Sciatic nerve (tissue), 2 donors: ENCODE measurements at regions of chr17 and their contacts with region 1.

Region 1: DNA sequence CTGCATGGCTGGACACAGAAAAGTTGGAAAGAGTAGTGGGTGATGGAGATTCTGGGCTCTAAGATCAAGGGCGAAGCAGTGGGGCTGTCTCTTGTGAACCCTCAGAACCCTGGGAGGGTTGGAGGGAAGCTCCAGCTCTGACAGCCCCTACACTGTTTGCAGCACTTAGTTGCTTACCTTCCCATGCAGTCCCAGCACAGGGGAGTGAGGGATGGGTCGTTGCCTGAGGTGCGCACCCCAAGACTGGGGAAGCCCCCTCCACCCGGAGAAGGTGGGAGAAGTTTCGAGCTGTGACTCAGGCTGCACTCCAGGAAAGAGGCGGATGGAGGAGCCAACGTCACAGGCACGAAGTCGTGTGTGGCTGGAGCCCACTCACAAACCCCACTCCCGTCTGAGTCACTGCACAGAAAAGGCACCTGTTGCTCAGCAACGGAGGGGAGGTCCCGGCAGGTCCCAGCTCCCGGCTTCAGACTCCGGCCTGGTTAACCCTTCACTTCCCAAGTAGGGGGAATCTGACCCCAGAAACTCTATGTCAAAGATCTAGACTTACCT is 60.1 kb downstream of the AIPL1 start:
- DNase-seq: no peak
- ATAC-seq: no peak

Region 2: DNA sequence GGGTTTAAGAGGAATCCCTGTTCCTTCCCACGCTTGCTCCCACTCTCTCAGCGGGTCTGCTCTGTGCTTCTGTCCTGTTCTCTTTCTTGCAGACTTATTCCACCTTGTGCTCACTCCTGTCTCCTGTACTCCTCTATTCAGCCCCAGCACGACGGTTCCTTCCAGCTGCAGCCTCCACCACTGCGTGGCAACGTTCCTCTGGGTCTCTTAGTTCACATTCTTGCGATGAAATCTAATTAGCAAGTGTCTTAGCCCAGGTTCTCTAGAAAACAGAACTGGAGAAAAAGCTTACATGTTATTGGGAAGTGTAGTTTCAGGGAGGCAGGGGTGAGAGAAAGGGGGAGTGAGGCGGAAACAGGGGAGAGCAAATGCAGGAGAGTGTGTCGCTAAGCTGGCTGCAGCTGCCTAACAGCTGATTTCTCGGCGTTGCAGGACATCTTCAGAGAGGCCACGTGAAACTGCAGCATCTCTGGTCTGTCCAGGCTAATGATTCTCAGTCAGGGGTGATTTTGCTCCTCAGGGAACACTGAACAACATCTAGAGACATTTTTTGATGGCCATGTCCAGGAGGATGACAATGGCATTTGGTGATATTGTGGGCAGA is 577.3 kb before region 1 on chr17:
- intact Hi-C with region 1: loop called (anchors 5 kb)
- DNase-seq: no peak
- ATAC-seq: no peak

Region 3: GRCh38 chr17:6334395-6334794 is 40.4 kb before region 1 on chr17:
- intact Hi-C with region 1: loop called (anchors 1 kb)
- DNase-seq: no peak
- ATAC-seq: no peak

Region 4: DNA sequence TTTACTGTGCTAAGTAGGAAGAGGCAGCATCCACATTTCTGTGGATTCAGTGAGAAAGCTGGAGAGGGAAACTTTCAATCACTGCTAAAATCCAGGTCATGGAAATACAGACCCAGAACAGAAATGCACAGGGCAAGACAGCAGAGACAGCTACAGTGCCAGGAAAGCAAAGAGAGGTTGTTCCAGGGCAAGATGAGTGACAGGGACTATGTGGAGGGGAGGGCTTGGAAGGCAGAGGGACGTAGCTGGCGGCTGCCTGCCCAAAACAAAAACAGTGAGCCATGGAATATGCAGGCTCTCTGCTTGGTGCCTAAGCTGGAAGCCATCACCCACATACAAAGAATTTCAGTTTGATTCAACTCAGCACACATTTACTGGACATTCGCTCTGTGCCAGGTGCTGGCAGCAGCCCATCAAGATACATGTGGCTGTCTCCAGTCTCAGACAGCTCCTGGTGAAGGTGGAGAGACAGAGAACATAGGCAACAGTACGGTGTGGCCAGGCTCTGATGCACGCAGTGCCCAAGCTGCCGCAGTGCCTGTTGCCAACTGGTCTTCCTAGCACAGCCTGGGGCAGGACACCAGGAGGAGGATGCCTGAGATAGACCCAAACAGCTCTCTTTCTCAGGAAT is 28.6 kb before region 1 on chr17:
- intact Hi-C with region 1: no loop called
- DNase-seq: no peak
- ATAC-seq: no peak

Region 5: GRCh38 chr17:6548578-6549330 is 173.9 kb after region 1 on chr17:
- intact Hi-C with region 1: no loop called
- DNase-seq: no peak
- ATAC-seq: peak; percentile 25